ENCODE measurements at regions of chr11 and their contacts with region 1.

Region 1: GRCh38 chr11:13343931-13344717 is 66.5 kb downstream of the BMAL1 start:
- DNase-seq: peak; percentile 76
- CTCF ChIP-seq: peak; percentile 76

Region 2: GRCh38 chr11:13210424-13210823 is 133.7 kb before region 1 on chr11:
- CTCF ChIA-PET with region 1: interaction called, 10 read pairs
- POLR2A ChIA-PET with region 1: no interaction called
- DNase-seq: no peak
- CTCF ChIP-seq: peak; percentile 45

Region 3: DNA sequence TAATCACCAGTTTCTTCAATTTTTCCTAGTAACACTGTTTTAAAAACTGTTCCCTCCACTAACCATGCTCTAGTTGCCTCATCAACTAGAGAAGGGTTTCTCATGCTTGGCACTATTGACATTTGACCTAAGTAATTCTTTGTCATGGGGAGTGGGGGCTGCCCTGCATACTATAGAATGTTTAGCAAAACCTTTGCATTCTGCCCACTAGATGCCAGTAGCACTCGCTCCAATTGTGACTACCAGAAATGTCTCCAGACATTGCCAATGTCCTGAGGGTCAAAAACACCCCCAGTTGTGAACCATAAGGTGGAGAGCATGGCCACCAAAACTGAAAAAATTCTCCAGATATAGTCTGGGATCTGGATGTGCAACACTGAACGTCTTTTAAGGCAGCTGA is 94.1 kb before region 1 on chr11:
- CTCF ChIA-PET with region 1: interaction called, 12 read pairs
- POLR2A ChIA-PET with region 1: no interaction called
- DNase-seq: no peak
- CTCF ChIP-seq: peak; percentile 29

Region 4: GRCh38 chr11:13316528-13316961 is 27.6 kb before region 1 on chr11:
- CTCF ChIA-PET with region 1: interaction called, 29 read pairs
- POLR2A ChIA-PET with region 1: no interaction called
- DNase-seq: no peak
- CTCF ChIP-seq: no peak

Region 5: GRCh38 chr11:13354335-13354734 is 10.2 kb after region 1 on chr11:
- CTCF ChIA-PET with region 1: interaction called, 29 read pairs
- POLR2A ChIA-PET with region 1: no interaction called
- DNase-seq: no peak
- CTCF ChIP-seq: peak; percentile 1